ENCODE measurements at regions of chr16 and their contacts with region 1.

Region 1: GRCh38 chr16:63461248-63461841 is 1425.1 kb upstream of the CDH8 start:
- DNase-seq: peak; percentile 58
- H3K4me3 Mint-ChIP-seq: no peak overlapping the region
- H3K27ac Mint-ChIP-seq: no peak overlapping the region
- H3K4me1 Mint-ChIP-seq: no peaks in the 10 kb centered on the region
- H3K27me3 Mint-ChIP-seq: no peaks in the 10 kb centered on the region
- CTCF ChIP-seq: peak; percentile 33

Region 2: GRCh38 chr16:63473725-63474124 is 12.4 kb after region 1 on chr16:
- CTCF ChIA-PET with region 1: interaction called, 15 read pairs
- POLR2A ChIA-PET with region 1: no interaction called
- intact Hi-C with region 1: no loop called
- DNase-seq: no peak
- H3K4me3 Mint-ChIP-seq: no peak overlapping the region
- H3K27ac Mint-ChIP-seq: no peak overlapping the region
- H3K4me1 Mint-ChIP-seq: no peaks in the 10 kb centered on the region
- H3K27me3 Mint-ChIP-seq: no peaks in the 10 kb centered on the region
- CTCF ChIP-seq: no peak

Region 3: DNA sequence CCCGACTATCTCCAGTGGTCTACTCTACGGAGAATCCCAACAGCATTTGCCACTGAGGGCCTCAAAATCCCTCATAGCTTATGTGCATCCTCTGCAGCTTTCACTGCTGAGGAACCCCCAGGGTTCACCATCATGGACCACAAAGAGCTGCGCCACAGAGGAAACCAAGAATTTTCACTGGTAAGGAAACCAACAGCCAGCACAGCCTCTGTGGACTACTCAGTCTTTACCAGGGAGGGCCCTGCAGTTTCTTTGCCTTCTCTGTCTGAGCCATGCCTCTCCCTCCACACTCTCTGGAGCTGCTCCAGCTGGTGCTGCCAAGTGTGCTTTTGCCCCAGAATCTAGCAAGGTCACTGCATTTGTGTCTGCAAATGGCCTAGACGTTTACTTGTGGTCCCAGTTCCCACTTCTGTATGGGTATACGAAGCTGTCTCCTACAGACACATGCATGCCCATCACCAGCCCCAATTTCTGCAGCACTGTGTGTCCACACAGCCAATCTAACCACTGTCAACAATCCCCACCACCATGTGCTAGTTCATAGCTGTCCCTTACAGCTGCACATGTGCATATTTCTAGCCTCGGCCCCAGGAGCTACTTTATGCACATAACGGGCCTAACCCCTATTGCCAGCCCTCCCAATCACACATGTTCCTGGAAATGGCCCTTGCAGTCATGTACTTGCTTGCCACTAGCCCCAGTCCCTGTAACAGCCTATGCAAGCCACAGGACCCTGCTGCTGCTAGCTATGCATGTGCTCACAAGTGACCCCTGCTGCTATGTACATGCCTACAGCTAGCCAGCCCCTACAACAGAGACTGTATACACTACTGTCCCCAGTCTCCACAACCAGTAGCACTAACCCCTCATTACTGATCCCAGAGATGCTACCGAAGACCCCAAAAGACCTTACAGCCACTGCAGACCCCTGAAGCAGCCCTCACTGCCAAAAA is 223.1 kb after region 1 on chr16:
- CTCF ChIA-PET with region 1: interaction called, 11 read pairs
- POLR2A ChIA-PET with region 1: no interaction called
- intact Hi-C with region 1: no loop called
- DNase-seq: no peak
- H3K4me3 Mint-ChIP-seq: no peak overlapping the region
- H3K27ac Mint-ChIP-seq: no peak overlapping the region
- H3K4me1 Mint-ChIP-seq: peaks cover 5% of the 10 kb centered on the region
- H3K27me3 Mint-ChIP-seq: no peaks in the 10 kb centered on the region
- CTCF ChIP-seq: no peak

Region 4: GRCh38 chr16:63806794-63807506 is 345.6 kb after region 1 on chr16:
- CTCF ChIA-PET with region 1: no interaction called
- POLR2A ChIA-PET with region 1: no interaction called
- intact Hi-C with region 1: no loop called
- DNase-seq: peak; percentile 63
- H3K4me3 Mint-ChIP-seq: no peak overlapping the region
- H3K27ac Mint-ChIP-seq: no peak overlapping the region
- H3K4me1 Mint-ChIP-seq: no peaks in the 10 kb centered on the region
- H3K27me3 Mint-ChIP-seq: no peaks in the 10 kb centered on the region
- CTCF ChIP-seq: no peak

Region 5: GRCh38 chr16:64455254-64455653 is 993.9 kb after region 1 on chr16:
- CTCF ChIA-PET with region 1: interaction called, 4 read pairs
- POLR2A ChIA-PET with region 1: no interaction called
- intact Hi-C with region 1: loop called (anchors 2 kb)
- DNase-seq: peak; percentile 23
- H3K4me3 Mint-ChIP-seq: no peak overlapping the region
- H3K27ac Mint-ChIP-seq: no peak overlapping the region
- H3K4me1 Mint-ChIP-seq: peaks cover under 1% of the 10 kb centered on the region
- H3K27me3 Mint-ChIP-seq: no peaks in the 10 kb centered on the region
- CTCF ChIP-seq: peak; percentile 23